A673 (cell line): ENCODE measurements at regions of chr22 and their contacts with region 1.

Region 1: GRCh38 chr22:20069331-20070042 is 10.6 kb upstream of the DGCR8 start:
- DNase-seq: no peak
- H3K4me3 ChIP-seq: no peak overlapping the region
- H3K27ac ChIP-seq: no peak overlapping the region
- H3K4me1 ChIP-seq: no peaks in the 10 kb centered on the region
- H3K27me3 ChIP-seq: no peaks in the 10 kb centered on the region
- CTCF ChIP-seq: no peak

Region 2: DNA sequence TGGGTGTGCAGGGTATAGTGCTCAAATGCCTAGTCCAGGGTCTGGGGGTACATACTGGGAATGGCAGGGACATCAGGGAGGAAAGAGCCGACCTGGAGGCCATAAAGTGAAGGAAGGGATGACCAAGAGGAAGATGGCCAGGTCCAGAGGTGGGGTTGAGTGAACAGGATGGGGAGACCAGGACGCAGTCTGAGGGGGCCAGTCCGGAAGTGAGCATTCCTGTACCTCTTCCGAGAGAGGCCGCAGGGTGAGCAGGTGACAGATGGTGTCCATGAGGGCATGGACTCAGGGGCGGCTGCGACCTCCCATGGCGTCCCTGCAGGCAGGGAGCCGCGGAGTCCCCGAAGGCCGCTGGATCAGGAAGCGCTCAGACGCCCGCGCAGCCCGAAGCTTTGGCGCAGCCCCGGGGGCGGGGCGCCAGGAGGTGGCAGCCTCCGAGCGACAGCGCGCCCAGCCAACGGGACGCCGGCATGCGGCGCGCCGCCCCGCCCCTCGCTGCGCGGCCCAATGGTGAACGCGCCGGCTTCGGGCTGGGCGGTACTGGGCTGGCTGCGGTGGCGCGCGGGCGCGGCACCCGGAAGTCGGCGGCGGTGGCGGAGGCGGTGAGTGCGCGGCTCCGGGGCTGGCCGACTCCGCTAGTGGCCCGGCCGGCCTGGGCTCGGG is 48.8 kb before region 1 on chr22 and contains the start of gene TANGO2:
- CTCF ChIA-PET with region 1: no interaction called
- POLR2A ChIA-PET with region 1: no interaction called
- intact Hi-C with region 1: no loop called
- DNase-seq: peak; percentile 95
- H3K4me3 ChIP-seq: peak within 1 kb of the TSS; percentile 86
- H3K27ac ChIP-seq: peak within 1 kb of the TSS; percentile 78
- H3K4me1 ChIP-seq: peaks cover 5% of the 10 kb centered on the region
- H3K27me3 ChIP-seq: peaks cover 20% of the 10 kb centered on the region
- CTCF ChIP-seq: no peak
- total RNA-seq, gene TANGO2: 17.7 and 21.5 TPM in 2 replicates

Region 3: GRCh38 chr22:21797444-21798221 is 1728.1 kb after region 1 on chr22:
- CTCF ChIA-PET with region 1: interaction called, 10 read pairs
- POLR2A ChIA-PET with region 1: no interaction called
- intact Hi-C with region 1: no loop called
- DNase-seq: no peak
- H3K4me3 ChIP-seq: no peak overlapping the region
- H3K27ac ChIP-seq: no peak overlapping the region
- H3K4me1 ChIP-seq: peaks cover 6% of the 10 kb centered on the region
- H3K27me3 ChIP-seq: no peaks in the 10 kb centered on the region
- CTCF ChIP-seq: no peak